ENCODE measurements at regions of chr1 and their contacts with region 1.

Region 1: DNA sequence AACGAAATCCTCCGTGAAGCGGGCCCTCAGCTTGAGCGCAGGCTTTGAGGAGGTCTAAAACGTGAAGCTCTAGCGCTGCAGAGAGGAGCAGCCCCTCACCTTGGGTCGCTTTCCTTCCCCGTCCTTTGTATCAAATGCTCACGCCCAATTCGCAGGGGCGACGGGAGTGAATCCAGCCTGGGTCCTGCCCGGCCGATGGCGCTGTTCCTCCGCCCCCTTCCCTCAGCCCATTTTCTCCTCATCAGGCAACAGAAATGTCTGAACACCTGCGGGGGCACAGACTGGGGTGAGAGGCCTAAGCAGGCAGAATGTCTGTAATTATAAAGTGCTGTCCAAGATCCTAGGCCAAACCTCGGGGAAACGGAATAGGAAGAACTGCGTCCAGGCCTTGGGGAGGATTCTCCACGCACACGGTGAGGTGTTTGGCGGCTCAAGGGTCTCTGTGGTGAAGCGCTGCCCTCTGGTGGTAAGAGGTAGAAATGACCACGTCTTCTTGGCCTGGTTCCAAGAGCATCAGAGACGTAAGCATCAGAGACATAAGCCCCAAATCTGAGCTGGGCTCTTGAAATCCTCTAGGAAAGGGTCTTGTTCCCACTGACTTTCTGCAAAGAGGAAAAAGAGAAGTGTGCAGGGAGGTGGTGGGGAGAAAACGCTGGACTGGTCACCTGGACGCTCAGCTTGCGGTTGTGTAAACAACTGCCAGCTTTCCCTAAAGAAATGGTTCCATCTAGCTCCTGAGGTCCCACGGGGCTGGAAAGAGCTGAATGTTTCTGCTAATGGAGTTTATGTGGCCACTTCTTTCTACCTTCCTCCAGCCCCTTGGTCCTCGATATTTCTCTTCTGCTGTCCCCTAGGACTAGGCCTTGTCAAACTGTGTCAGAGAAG is 92.1 kb upstream of the CD53 start:
- DNase-seq: peak; percentile 48
- ATAC-seq: peak; percentile 85
- H3K4me3 Mint-ChIP-seq: peak overlapping the region; percentile 47
- H3K27ac Mint-ChIP-seq: no peak overlapping the region
- H3K4me1 Mint-ChIP-seq: peaks cover 43% of the 10 kb centered on the region
- H3K27me3 Mint-ChIP-seq: no peaks in the 10 kb centered on the region
- CTCF ChIP-seq: no peak

Region 2: GRCh38 chr1:110229348-110230001 is 551.4 kb before region 1 on chr1:
- CTCF ChIA-PET with region 1: no interaction called
- POLR2A ChIA-PET with region 1: no interaction called
- intact Hi-C with region 1: no loop called
- DNase-seq: no peak
- ATAC-seq: no peak
- H3K4me3 Mint-ChIP-seq: no peak overlapping the region
- H3K27ac Mint-ChIP-seq: no peak overlapping the region
- H3K4me1 Mint-ChIP-seq: no peaks in the 10 kb centered on the region
- H3K27me3 Mint-ChIP-seq: no peaks in the 10 kb centered on the region
- CTCF ChIP-seq: no peak

Region 3: GRCh38 chr1:110412576-110412975 is 368.3 kb before region 1 on chr1:
- CTCF ChIA-PET with region 1: no interaction called
- POLR2A ChIA-PET with region 1: no interaction called
- intact Hi-C with region 1: loop called (anchors 2 kb)
- DNase-seq: peak; percentile 56
- ATAC-seq: peak; percentile 66
- H3K4me3 Mint-ChIP-seq: peak overlapping the region; percentile 66
- H3K27ac Mint-ChIP-seq: peak overlapping the region; percentile 67
- H3K4me1 Mint-ChIP-seq: peaks cover 23% of the 10 kb centered on the region
- H3K27me3 Mint-ChIP-seq: no peaks in the 10 kb centered on the region
- CTCF ChIP-seq: no peak

Region 4: GRCh38 chr1:110619412-110620249 is 161.2 kb before region 1 on chr1:
- CTCF ChIA-PET with region 1: interaction called, 98 read pairs
- POLR2A ChIA-PET with region 1: interaction called, 9 read pairs
- intact Hi-C with region 1: loop called (anchors 1 kb)
- DNase-seq: peak; percentile 89
- ATAC-seq: peak; percentile 89
- H3K4me3 Mint-ChIP-seq: peak overlapping the region; percentile 92
- H3K27ac Mint-ChIP-seq: peak overlapping the region; percentile 87
- H3K4me1 Mint-ChIP-seq: peaks cover 25% of the 10 kb centered on the region
- H3K27me3 Mint-ChIP-seq: no peaks in the 10 kb centered on the region
- CTCF ChIP-seq: peak; percentile 93

Region 5: DNA sequence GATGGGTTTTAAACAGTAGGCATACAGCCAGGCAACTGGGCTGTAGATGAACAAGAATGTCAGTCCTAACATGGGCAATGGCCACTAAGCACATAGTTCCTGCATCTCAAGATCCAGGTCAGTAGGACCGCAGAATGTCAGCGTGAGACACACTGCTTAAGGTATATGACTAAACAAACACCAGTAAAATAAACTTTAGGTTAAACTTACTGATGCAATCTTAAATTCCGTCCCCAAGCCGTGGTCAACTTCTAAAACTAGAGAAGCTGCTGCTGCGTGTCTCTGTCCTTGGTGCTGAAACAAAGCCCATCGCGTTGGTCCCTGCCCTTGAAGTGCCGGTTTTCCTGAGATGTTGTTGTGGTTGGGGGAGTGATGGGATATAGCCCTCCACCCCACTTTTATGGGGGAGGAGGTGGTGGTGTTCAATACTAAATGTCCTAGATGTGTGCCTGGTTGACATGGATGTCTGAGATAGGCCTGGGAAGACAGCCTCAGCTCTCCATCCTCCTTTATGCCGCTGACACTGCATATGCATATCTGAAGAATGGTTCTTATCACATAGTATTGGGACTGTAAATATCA is 34.2 kb before region 1 on chr1:
- CTCF ChIA-PET with region 1: no interaction called
- POLR2A ChIA-PET with region 1: no interaction called
- intact Hi-C with region 1: no loop called
- DNase-seq: no peak
- ATAC-seq: no peak
- H3K4me3 Mint-ChIP-seq: no peak overlapping the region
- H3K27ac Mint-ChIP-seq: peak overlapping the region; percentile 47
- H3K4me1 Mint-ChIP-seq: no peaks in the 10 kb centered on the region
- H3K27me3 Mint-ChIP-seq: peaks cover 36% of the 10 kb centered on the region
- CTCF ChIP-seq: no peak

Region 6: DNA sequence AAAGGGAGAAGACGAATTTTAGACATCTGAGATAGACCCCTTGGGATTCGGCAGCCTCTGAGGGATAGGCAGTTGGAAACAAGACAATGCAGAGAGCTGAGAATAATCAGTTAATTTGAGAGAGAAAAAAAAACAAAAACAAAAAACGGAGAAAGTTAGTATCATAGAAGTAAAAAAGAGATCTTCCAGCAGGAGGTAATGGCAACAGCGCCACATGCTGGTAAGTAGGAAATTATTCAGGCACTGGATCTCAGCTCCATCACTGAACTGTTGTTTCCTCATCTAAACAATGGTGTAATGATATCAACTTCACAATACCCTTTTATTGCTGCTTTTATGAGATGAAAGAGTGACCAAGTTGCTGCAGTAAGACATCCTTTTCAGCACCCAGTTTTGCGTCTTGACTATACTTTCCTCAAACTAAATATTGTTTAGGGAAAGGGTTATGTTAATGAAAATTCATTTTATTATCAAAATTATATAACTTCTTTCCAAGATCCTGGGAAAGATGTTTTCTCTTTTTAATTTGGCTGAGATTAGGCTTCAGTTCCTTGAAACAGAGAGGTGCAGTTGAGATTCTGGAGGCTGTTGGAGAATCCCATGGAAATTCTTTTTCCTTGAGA is 14.7 kb before region 1 on chr1:
- CTCF ChIA-PET with region 1: interaction called, 55 read pairs
- POLR2A ChIA-PET with region 1: no interaction called
- intact Hi-C with region 1: loop called (anchors 1 kb)
- DNase-seq: no peak
- ATAC-seq: peak; percentile 62
- H3K4me3 Mint-ChIP-seq: no peak overlapping the region
- H3K27ac Mint-ChIP-seq: no peak overlapping the region
- H3K4me1 Mint-ChIP-seq: peaks cover 3% of the 10 kb centered on the region
- H3K27me3 Mint-ChIP-seq: peaks cover 10% of the 10 kb centered on the region
- CTCF ChIP-seq: no peak

Region 7: GRCh38 chr1:110872745-110873720 is 92.2 kb after region 1 on chr1 and contains the start of gene CD53:
- CTCF ChIA-PET with region 1: interaction called, 44 read pairs
- POLR2A ChIA-PET with region 1: interaction called, 98 read pairs
- intact Hi-C with region 1: loop called (anchors 1 kb)
- DNase-seq: peak; percentile 27
- ATAC-seq: peak; percentile 64
- H3K4me3 Mint-ChIP-seq: peak within 1 kb of the TSS; percentile 96
- H3K27ac Mint-ChIP-seq: peak within 1 kb of the TSS; percentile 99
- H3K4me1 Mint-ChIP-seq: peaks cover 75% of the 10 kb centered on the region
- H3K27me3 Mint-ChIP-seq: no peaks in the 10 kb centered on the region
- CTCF ChIP-seq: no peak
- total RNA-seq, gene CD53: 491 and 522 TPM in 2 replicates

Region 8: DNA sequence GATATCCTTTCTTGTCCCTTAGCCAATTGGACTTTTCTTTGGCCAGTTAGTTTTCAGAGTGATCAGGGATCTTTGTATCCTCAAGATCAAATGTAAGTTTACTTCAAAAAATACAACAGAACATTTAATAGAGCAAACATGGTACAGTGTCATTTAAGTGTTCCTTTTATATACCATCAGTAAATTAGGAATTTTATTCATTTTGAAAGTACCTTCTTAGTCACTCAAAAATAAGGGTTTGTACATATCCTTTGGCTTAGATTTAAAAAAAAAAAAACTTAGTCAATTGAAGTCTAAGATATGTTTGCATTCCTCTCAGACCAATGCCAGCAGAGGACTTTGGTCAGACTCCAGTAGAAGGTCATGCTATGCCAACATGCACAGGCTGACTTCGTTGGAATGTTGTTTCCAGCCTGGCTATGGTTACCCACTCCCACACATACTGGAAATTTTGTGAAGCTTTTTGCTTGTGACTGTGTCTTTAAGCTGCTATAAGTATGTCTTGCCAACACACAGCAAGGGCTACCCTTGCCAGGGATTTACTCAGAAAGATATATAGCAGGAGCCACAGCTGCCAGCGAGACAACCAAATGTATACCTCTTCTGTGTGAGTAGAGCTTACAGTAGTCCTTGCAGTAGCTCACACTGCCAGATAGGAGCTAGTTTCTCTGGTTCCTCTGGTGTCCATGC is 264.3 kb after region 1 on chr1:
- CTCF ChIA-PET with region 1: no interaction called
- POLR2A ChIA-PET with region 1: no interaction called
- intact Hi-C with region 1: no loop called
- DNase-seq: no peak
- ATAC-seq: no peak
- H3K4me3 Mint-ChIP-seq: no peak overlapping the region
- H3K27ac Mint-ChIP-seq: no peak overlapping the region
- H3K4me1 Mint-ChIP-seq: no peaks in the 10 kb centered on the region
- H3K27me3 Mint-ChIP-seq: no peaks in the 10 kb centered on the region
- CTCF ChIP-seq: no peak

Region 9: DNA sequence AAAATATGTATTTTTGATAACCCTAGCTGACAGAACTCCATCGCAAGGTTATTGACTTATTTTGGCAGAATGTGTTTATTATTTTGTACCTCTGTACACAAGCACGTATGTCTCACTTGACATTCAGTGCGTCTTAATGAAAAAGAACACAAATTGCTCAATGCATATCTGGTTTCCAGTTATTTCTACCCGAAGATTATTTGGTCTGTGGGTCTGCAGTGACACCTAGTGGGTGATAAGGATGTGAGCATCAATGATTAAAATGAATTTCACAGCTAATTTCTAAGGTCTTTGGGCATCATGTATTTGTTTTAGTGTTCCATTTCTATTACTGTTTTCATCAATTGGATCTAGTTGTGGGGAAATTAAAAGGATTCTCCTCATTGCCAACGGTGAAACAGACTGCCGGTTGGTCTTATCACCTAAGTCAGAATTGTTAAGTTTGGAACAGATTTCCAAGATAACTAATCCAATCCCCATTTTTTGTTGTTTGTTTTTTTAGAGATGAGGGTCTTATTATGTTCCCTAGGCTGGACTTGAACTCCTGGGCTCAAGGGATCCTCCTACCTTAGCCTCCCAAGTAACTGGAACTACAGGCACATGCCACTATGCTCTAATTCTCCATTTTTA is 988.8 kb after region 1 on chr1:
- CTCF ChIA-PET with region 1: no interaction called
- POLR2A ChIA-PET with region 1: no interaction called
- intact Hi-C with region 1: loop called (anchors 2 kb)
- DNase-seq: no peak
- ATAC-seq: peak; percentile 58
- H3K4me3 Mint-ChIP-seq: no peak overlapping the region
- H3K27ac Mint-ChIP-seq: no peak overlapping the region
- H3K4me1 Mint-ChIP-seq: no peaks in the 10 kb centered on the region
- H3K27me3 Mint-ChIP-seq: no peaks in the 10 kb centered on the region
- CTCF ChIP-seq: no peak

Measured in activated B cell treated with CpG ODN at 0.5 μM for 24 hours (primary cell).